ENCODE measurements at regions of chr21 and their contacts with region 1.

Region 1: GRCh38 chr21:35940074-35940927 is 120.0 kb downstream of the SETD4 start:
- DNase-seq: peak in 6 of 10 donors; percentile 14 to 59 (median 46)
- H3K4me3 ChIP-seq: peak overlapping the region in 31 of 59 donors; percentile 10 to 59 (median 27)
- H3K27ac ChIP-seq: no peak overlapping the region
- H3K27me3 ChIP-seq: peaks cover 0 to 5% (median 0%) of the 10 kb centered on the region in 45 donors
- CTCF ChIP-seq: peak in 55 of 56 donors; percentile 45 to 84 (median 67)

Region 2: GRCh38 chr21:35051287-35051818 is 888.9 kb before region 1 on chr21:
- intact Hi-C with region 1: loop called in 1 of 2 experiments (anchors 5 kb)
- DNase-seq: peak in 9 of 10 donors; percentile 30 to 67 (median 55)
- H3K4me3 ChIP-seq: no peak overlapping the region
- H3K27ac ChIP-seq: peak overlapping the region in 4 of 59 donors; percentile 11 to 46 (median 16)
- H3K27me3 ChIP-seq: peaks cover 0 to 28% (median 7%) of the 10 kb centered on the region in 45 donors
- CTCF ChIP-seq: peak in 51 of 56 donors; percentile 18 to 73 (median 47)